Heart left ventricle (tissue), 16 donors: ENCODE measurements at regions of chr16 and their contacts with region 1.

Region 1: DNA sequence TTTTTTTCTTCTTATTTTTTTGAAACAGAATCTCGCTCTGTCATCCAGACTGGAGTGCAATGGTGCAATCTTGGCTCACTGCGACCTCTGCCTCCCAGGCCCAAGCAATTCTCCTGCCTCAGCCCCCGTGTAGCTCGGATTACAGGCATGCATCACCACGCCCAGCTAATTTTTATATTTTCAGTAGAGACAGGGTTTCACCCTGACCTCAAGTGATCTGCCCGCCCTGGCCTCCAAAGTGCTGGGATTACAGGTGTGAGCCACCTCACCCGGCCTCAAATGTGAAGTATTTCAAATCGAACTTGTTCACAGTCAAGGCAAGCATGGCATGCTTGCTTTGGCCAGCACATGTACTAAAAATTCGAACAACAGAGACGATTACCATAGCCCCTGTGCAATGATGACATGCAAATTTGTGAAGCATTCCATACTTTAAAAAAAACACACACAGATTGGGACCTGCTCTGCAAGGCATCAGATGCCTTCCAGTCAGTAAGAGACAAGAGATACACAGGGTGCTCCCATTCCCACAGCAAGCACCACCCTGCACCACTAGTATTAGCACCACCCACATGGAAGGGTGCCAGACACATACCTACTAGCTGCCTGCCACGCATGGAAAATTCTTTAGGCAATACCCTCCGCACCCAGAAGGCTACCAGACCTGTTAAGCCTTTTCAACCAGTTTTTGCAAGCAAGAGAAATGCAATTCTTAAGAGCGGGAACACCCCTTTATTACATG is 47.2 kb downstream of the ANKRD11 start:
- DNase-seq: peak in 3 of 5 donors; percentile 43 to 56 (median 46)
- ATAC-seq: peak; percentile 39 to 58 (median 47)
- H3K4me3 ChIP-seq: no peak overlapping the region
- H3K27ac ChIP-seq: peak overlapping the region in 9 of 12 donors; percentile 5 to 60 (median 33)
- H3K4me1 ChIP-seq: peaks cover 10 to 99% (median 78%) of the 10 kb centered on the region in 12 donors
- H3K27me3 ChIP-seq: no peaks in the 10 kb centered on the region
- CTCF ChIP-seq: peak in 2 of 12 donors; percentile 5 to 6
- POLR2A ChIP-seq: no peak

Region 2: GRCh38 chr16:89395141-89395874 is 47.9 kb before region 1 on chr16:
- intact Hi-C with region 1: loop called in 1 of 10 experiments (anchors 5 kb)
- DNase-seq: peak; percentile 85 to 95 (median 91)
- ATAC-seq: peak; percentile 92 to 95 (median 94)
- H3K4me3 ChIP-seq: peak overlapping the region in 3 of 12 donors; percentile 0 to 30 (median 9)
- H3K27ac ChIP-seq: peak overlapping the region in 10 of 12 donors; percentile 32 to 83 (median 60)
- H3K4me1 ChIP-seq: peaks cover 15 to 72% (median 41%) of the 10 kb centered on the region in 12 donors
- H3K27me3 ChIP-seq: no peaks in the 10 kb centered on the region
- CTCF ChIP-seq: no peak
- POLR2A ChIP-seq: no peak

Region 3: GRCh38 chr16:89476804-89477261 is 33.7 kb after region 1 on chr16:
- intact Hi-C with region 1: loop called in 4 of 10 experiments (anchors 5 to 10 kb)
- DNase-seq: no peak
- ATAC-seq: no peak
- H3K4me3 ChIP-seq: no peak overlapping the region
- H3K27ac ChIP-seq: no peak overlapping the region
- H3K4me1 ChIP-seq: peaks cover 0 to 99% (median 73%) of the 10 kb centered on the region in 12 donors
- H3K27me3 ChIP-seq: no peaks in the 10 kb centered on the region
- CTCF ChIP-seq: no peak
- POLR2A ChIP-seq: no peak

Region 4: GRCh38 chr16:89764711-89765201 is 321.6 kb after region 1 on chr16:
- intact Hi-C with region 1: loop called in 1 of 10 experiments (anchors 5 kb)
- DNase-seq: peak in 4 of 5 donors; percentile 27 to 58 (median 46)
- ATAC-seq: peak; percentile 39 to 79 (median 66)
- H3K4me3 ChIP-seq: peak overlapping the region in 4 of 12 donors; percentile 24 to 49 (median 28)
- H3K27ac ChIP-seq: peak overlapping the region in 2 of 12 donors; percentile 0 to 78
- H3K4me1 ChIP-seq: peaks cover 0 to 41% (median 0%) of the 10 kb centered on the region in 12 donors
- H3K27me3 ChIP-seq: no peaks in the 10 kb centered on the region
- CTCF ChIP-seq: no peak
- POLR2A ChIP-seq: no peak